Heart left ventricle (tissue), 16 donors: ENCODE measurements at regions of chr9 and their contacts with region 1.

Region 1: DNA sequence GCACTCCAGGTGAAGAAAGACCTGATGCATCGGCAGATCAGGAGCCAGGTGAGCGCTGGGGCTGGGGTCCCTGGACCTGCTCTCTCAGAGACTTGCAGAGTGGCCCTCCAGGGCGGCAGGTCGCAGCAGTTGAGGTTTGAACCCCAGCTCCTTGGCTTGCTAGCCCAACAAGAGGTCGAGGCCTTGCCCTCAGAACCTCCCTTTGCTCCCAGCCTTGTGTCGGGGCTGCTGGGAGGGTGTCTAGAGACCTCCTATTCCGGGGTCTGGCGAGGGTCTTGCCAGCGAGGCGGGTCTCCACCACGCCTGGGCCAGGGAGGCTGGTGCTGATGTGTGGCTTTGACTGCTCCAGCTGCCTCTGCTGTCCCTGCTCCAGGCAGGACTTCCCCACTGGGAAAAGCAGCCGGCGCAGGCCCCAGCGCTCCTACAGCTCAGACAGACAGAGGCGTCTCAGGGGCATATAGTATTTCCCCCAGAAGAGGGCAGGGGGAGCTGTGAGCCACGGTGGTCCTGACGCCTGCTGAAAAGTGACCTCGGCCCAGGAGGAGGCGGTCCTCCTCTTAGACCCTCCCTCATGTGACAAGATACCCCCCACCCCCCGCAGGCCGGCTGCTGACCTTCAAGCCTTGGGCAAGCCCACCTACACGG is 38.3 kb downstream of the LRSAM1 start:
- DNase-seq: no peak
- ATAC-seq: no peak
- H3K4me3 ChIP-seq: no peak overlapping the region
- H3K27ac ChIP-seq: no peak overlapping the region
- H3K4me1 ChIP-seq: peaks cover 0 to 18% (median 7%) of the 10 kb centered on the region in 12 donors
- H3K27me3 ChIP-seq: no peaks in the 10 kb centered on the region
- CTCF ChIP-seq: no peak
- POLR2A ChIP-seq: no peak

Region 2: GRCh38 chr9:127463911-127464310 is 25.7 kb before region 1 on chr9:
- intact Hi-C with region 1: loop called in 1 of 10 experiments (anchors 1 kb)
- DNase-seq: peak in 4 of 5 donors; percentile 43 to 82 (median 70)
- ATAC-seq: peak; percentile 94 to 95 (median 94)
- H3K4me3 ChIP-seq: no peak overlapping the region
- H3K27ac ChIP-seq: peak overlapping the region in 9 of 12 donors; percentile 40 to 84 (median 74)
- H3K4me1 ChIP-seq: peaks cover 0 to 19% (median 0%) of the 10 kb centered on the region in 12 donors
- H3K27me3 ChIP-seq: no peaks in the 10 kb centered on the region
- CTCF ChIP-seq: no peak
- POLR2A ChIP-seq: no peak

Region 3: DNA sequence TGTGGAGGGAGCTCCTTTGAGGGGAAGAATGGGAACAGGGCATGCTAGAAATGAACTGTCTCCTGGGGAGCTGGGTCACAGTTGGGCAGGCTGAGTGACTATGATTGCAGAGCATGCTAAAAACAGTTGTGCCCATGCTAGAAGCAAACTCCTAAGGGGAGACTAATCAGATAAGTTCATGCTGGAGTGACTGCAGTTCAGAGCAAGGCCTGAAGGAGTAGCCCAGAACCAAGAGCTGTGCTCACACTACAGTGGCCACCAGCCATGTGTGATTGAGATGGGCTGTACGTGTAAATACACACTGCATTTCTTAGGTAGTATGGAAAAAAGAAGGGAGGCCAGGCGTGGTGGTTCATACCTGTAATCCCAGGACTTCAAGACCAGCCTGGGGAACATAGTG is 398.2 kb after region 1 on chr9:
- intact Hi-C with region 1: loop called in 1 of 10 experiments (anchors 10 kb)
- DNase-seq: no peak
- ATAC-seq: no peak
- H3K4me3 ChIP-seq: no peak overlapping the region
- H3K27ac ChIP-seq: no peak overlapping the region
- H3K4me1 ChIP-seq: peaks cover 0 to 39% (median 16%) of the 10 kb centered on the region in 12 donors
- H3K27me3 ChIP-seq: no peaks in the 10 kb centered on the region
- CTCF ChIP-seq: no peak
- POLR2A ChIP-seq: no peak

Region 4: GRCh38 chr9:127937388-127938280 is 448.0 kb after region 1 on chr9 and contains the start of gene DPM2:
- intact Hi-C with region 1: no loop called
- DNase-seq: peak; percentile 84 to 91 (median 88)
- ATAC-seq: peak; percentile 85 to 94 (median 89)
- H3K4me3 ChIP-seq: peak within 1 kb of the TSS; percentile 43 to 93 (median 78)
- H3K27ac ChIP-seq: peak within 1 kb of the TSS in 11 of 12 donors; percentile 43 to 80 (median 74)
- H3K4me1 ChIP-seq: peaks cover 6 to 37% (median 29%) of the 10 kb centered on the region in 12 donors
- H3K27me3 ChIP-seq: no peaks in the 10 kb centered on the region
- CTCF ChIP-seq: no peak
- POLR2A ChIP-seq: peak in 1 of 2 donors; percentile 68
- total RNA-seq, gene DPM2: 7.2 to 19.5 (median 11.7) TPM